ENCODE measurements at regions of chr3 and their contacts with region 1.

Region 1: DNA sequence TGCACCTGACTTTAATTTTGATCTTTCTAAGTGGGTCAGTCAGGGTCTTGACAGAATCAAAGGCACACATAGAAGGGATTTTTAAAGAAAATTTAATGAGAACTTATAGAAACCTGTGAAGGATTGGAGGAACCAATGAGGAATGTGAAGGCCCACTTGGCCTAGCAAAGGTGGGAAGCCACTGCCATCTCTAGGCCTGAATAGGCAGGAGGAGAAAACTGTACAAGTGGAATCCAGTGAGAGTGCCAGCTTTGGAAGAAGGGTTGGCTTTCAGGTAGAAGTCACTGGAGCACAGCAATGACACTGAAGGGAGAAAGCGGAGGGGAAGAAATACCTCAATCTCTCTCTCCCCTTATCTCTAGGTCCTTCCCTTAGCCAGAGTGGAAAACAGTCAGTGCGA is 380.7 kb upstream of the KCNMB2 start:
- DNase-seq: peak; percentile 19
- ATAC-seq: 0 out of 2 replicates have a peak, but pooled peaks have one; percentile 24
- H3K4me3 ChIP-seq: no peak overlapping the region
- H3K27ac ChIP-seq: no peak overlapping the region
- H3K4me1 ChIP-seq: no peaks in the 10 kb centered on the region
- H3K27me3 ChIP-seq: no peaks in the 10 kb centered on the region
- CTCF ChIP-seq: peak; percentile 39; the same call in 1 of the 2 replicates

Region 2: GRCh38 chr3:177378168-177378567 is 777.4 kb before region 1 on chr3:
- CTCF ChIA-PET with region 1: no interaction called
- POLR2A ChIA-PET with region 1: no interaction called
- intact Hi-C with region 1: loop called (anchors 10 kb)
- DNase-seq: no peak
- ATAC-seq: no peak
- H3K4me3 ChIP-seq: no peak overlapping the region
- H3K27ac ChIP-seq: no peak overlapping the region
- H3K4me1 ChIP-seq: no peaks in the 10 kb centered on the region
- H3K27me3 ChIP-seq: no peaks in the 10 kb centered on the region
- CTCF ChIP-seq: no peak

Region 3: DNA sequence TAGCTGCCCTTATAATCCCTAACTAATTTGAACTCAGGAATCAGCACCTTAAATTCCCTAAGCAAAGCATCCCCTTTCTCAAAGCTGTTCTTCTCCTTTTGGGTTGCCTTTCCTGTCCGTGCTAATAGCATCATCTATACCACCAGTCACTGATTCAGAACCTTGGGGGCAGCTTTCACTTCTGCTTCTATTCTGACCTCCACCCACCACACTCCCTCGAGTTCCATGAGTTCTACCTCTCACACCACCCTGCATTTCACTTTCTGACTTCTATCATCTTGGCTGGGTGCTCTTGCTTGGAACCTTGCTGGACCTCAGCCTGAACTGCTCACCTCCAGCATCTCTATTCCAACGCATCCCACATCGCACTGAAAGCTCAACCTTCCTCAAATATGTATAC is 325.3 kb after region 1 on chr3:
- CTCF ChIA-PET with region 1: no interaction called
- POLR2A ChIA-PET with region 1: no interaction called
- intact Hi-C with region 1: no loop called
- DNase-seq: no peak
- ATAC-seq: no peak
- H3K4me3 ChIP-seq: no peak overlapping the region
- H3K27ac ChIP-seq: no peak overlapping the region
- H3K4me1 ChIP-seq: no peaks in the 10 kb centered on the region
- H3K27me3 ChIP-seq: peaks cover 60% of the 10 kb centered on the region
- CTCF ChIP-seq: no peak